MCF 10A (cell line): ENCODE measurements at regions of chr7 and their contacts with region 1.

Region 1: DNA sequence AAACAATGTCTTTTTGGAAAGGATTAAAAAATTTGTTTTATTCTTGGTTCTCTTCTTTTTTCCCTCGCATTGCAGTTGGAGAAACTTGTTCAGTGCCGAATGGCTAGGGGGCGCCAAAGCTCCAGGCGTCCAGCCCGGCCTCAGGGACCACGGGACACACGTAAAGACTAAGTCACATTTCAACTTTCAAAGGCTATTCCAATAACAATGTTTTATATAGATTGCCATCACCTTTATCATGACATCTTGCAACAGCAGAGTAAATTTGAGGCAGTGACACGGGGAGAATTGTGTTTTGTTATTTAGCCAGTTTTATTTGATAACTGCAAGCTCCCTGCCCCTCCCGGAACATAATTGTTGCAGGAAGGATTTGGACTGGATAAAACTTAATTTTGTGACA is 2.2 kb upstream of the IGFBP3 start:
- DNase-seq: peak; percentile 71
- H3K4me3 Mint-ChIP-seq: no peak overlapping the region
- H3K27ac Mint-ChIP-seq: no peak overlapping the region
- H3K4me1 Mint-ChIP-seq: peaks cover 45% of the 10 kb centered on the region
- H3K27me3 Mint-ChIP-seq: no peaks in the 10 kb centered on the region
- CTCF ChIP-seq: peak; percentile 88

Region 2: DNA sequence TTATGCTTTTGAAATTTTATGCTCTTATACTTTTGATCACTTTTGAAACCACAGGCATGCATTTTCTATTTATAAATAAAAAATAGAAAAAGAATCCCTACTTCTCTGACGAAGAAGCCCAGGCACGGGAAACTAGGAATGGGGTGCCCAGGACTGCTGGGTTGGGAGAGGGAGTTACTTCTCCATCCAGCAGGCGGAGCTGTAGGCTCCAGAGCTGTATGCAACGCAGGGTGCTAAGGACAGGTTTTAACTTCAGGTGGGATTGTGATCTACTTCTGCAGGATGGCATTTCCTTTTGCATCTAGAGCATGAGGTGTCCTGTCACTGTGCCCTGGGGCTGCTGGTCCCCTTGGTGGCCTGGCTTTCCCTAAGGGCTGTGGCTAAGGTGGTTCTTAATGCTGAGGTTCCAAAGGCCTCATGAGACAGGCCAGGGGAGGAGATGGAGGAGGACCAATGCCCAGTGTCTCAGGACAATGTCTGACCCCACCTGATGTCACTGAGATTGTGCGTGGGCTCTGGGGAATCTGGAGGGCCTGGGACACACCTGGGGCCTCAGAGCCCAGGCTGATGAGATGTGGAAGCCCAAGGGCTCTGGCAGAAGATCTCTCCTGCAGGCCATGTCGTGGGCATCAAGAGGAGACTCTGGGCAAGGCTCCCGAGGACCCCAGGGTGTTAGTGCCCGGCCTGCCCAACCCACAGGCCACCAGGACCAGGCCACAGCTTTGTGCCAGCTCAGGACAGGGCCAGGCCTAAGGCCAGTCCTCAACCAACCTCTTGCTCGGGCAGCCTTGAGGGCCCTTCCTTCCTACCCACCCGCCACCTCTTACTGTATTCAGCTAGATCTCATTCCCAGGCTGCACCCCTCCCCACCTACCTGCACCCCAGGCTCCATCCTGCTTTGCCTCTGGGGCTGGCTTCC is 50.9 kb before region 1 on chr7:
- CTCF ChIA-PET with region 1: no interaction called
- POLR2A ChIA-PET with region 1: no interaction called
- intact Hi-C with region 1: loop called (anchors 5 kb)
- DNase-seq: peak; percentile 42
- H3K4me3 Mint-ChIP-seq: no peak overlapping the region
- H3K27ac Mint-ChIP-seq: no peak overlapping the region
- H3K4me1 Mint-ChIP-seq: peaks cover 6% of the 10 kb centered on the region
- H3K27me3 Mint-ChIP-seq: no peaks in the 10 kb centered on the region
- CTCF ChIP-seq: peak; percentile 61

Region 3: DNA sequence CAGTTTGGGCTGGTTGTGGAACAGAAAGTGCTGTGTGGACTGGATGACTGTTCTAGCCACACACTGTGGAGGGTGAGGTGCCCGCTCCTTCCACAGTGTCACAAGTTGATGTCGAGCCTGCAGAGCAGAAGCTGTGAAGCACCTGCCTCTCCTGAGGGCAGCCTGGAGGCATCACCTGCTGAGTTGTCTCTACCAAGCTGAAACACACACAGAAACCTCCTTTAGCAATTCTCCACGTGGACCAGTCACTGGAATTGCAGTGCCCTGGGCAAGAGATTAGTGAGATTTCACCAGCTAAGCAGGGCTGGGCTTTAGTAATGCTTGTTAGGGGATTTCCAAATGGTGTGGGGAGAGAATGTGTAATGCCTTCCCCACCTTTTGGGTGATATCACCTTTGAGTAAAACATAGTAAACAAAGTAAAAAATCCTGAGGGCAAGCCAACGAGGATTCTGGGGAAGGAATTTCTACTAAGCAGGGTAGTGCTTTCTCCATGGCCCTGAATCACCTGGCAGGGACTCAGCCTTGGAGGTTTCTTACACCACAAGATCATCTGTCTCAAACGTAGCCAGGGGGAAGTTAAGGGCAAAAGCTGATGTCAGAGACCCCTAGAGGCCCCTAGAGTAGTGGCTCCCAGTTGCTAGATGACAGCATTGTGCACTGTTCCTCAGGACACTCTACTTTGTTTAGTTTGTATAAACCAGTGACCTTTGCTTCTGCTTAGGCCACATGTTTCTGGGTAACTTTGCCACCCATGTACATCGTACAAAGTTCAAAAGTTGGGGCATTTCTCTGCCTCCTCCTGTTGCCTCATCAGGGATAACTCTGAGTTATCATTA is 230.9 kb after region 1 on chr7:
- CTCF ChIA-PET with region 1: interaction called, 4 read pairs
- POLR2A ChIA-PET with region 1: interaction called, 4 read pairs
- intact Hi-C with region 1: loop called (anchors 5 kb)
- DNase-seq: peak; percentile 80
- H3K4me3 Mint-ChIP-seq: no peak overlapping the region
- H3K27ac Mint-ChIP-seq: peak overlapping the region; percentile 81
- H3K4me1 Mint-ChIP-seq: peaks cover 25% of the 10 kb centered on the region
- H3K27me3 Mint-ChIP-seq: no peaks in the 10 kb centered on the region
- CTCF ChIP-seq: no peak

Region 4: DNA sequence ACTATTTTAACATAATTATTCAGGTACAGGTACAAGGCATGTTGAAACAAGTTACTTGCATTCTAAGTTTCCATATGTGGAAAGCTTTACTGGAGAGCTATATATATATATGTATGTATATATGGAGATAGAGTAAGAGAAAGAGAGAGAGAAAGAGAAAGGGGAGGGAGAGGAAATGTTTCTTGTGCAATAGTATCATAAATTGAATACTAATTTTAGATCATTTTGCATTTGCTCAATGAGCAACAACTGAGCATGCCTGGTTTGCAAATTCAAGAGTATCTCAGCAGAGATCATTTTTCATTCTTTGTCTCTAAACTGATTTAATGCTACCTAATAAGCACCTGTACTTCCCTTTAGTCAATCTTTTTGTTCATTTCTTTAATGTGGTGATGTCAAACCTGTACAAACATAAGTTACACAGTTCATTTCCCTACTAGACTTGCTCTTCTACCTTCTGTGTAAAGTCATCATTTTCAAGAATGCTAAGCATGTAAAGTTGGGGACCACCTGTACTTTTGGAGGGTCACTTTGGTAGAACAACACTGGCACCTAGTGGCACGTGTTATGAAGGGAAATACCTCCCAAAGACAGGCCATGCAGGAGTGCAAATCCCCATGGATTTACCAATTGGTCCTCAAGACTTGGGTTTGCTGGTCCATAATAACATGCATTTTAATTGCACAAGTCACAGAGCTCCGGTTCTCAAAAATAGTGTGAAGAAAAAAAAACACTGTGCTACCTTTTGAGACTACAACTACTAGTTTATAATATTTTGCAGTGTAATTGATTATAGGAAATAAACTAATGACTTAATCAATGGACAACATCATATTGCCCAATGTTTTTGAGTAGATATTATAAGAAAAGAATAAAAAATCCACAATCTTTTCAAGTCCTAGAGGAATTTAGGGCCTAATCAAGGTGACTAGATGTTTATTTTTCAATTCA is 429.0 kb after region 1 on chr7:
- CTCF ChIA-PET with region 1: interaction called, 191 read pairs
- POLR2A ChIA-PET with region 1: interaction called, 5 read pairs
- intact Hi-C with region 1: loop called (anchors 1 kb)
- DNase-seq: peak; percentile 71
- H3K4me3 Mint-ChIP-seq: no peak overlapping the region
- H3K27ac Mint-ChIP-seq: no peak overlapping the region
- H3K4me1 Mint-ChIP-seq: peaks cover 5% of the 10 kb centered on the region
- H3K27me3 Mint-ChIP-seq: no peaks in the 10 kb centered on the region
- CTCF ChIP-seq: peak; percentile 72

Region 5: DNA sequence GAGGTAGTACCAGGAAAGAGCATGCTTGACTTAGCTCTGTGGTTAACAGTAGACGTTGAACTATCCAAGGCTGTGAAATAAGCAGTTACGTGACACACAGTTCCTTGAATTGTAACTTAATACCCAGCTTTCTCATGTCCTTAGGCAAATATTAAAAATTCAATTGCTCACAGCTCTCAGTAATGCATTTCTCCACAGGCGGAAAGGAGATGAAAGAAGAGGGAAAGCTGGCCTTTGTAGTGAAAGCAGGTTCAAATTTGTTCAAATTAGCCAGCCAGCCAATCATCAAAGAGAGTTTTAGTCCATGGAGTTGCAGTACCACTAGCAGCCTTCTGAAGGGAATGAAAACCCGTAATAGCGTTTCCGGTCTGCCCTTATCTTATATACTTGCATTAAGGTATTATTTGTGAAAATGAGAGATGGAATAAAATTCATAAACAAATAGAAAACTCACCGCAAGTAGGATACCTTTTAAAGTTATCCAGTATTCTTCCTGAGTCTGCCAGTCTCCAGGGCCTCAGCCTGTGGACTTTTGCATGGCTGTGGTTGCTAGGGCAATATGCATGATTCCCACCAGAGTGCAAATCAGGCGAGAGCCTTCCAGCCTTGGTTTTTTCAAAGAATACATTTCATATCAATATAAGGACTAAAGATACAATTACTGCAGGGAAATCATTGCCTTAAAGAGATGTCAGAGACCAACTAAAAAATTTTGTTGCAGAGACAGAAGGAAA is 863.1 kb after region 1 on chr7:
- CTCF ChIA-PET with region 1: no interaction called
- POLR2A ChIA-PET with region 1: no interaction called
- intact Hi-C with region 1: loop called (anchors 10 kb)
- DNase-seq: peak; percentile 61
- H3K4me3 Mint-ChIP-seq: no peak overlapping the region
- H3K27ac Mint-ChIP-seq: peak overlapping the region; percentile 67
- H3K4me1 Mint-ChIP-seq: peaks cover 17% of the 10 kb centered on the region
- H3K27me3 Mint-ChIP-seq: no peaks in the 10 kb centered on the region
- CTCF ChIP-seq: no peak

Region 6: DNA sequence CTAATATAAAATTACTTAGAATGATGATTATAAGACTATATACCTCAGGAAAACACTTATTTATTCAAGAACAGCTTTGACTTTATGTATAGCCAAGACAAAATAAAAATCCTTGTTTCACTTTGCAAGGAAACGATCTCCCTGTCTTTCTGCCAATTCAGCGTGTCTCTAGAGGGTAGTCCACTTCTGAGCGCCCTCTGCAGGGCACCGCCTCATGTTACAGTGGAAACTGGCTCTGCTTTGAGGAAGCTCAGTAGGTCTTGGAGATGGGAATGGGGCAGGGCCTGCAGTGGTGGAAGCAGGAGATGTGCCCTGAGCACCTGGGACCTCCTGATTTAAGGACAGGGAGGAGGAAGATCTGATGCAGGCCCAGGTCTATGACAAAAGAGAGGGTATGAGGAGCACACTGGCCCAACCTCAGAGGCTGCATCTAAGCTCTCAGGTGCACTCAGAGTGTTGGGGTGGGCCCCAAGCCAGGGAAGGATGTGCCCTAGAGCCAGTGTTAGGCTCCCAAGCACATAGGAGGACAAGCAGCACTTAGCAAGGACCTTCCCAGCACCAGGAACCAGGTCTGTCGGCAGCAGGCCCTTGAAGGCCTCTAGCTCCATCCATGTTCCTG is 1177.6 kb after region 1 on chr7:
- CTCF ChIA-PET with region 1: interaction called, 4 read pairs
- POLR2A ChIA-PET with region 1: no interaction called
- intact Hi-C with region 1: loop called (anchors 5 kb)
- DNase-seq: peak; percentile 76
- H3K4me3 Mint-ChIP-seq: no peak overlapping the region
- H3K27ac Mint-ChIP-seq: no peak overlapping the region
- H3K4me1 Mint-ChIP-seq: peaks cover 5% of the 10 kb centered on the region
- H3K27me3 Mint-ChIP-seq: no peaks in the 10 kb centered on the region
- CTCF ChIP-seq: peak; percentile 50